Activated naive CD4-positive, alpha-beta T cell treated with anti-CD3 and anti-CD28 coated beads for 36 hours (primary cell): ENCODE measurements at regions of chr1 and their contacts with region 1.

Region 1: DNA sequence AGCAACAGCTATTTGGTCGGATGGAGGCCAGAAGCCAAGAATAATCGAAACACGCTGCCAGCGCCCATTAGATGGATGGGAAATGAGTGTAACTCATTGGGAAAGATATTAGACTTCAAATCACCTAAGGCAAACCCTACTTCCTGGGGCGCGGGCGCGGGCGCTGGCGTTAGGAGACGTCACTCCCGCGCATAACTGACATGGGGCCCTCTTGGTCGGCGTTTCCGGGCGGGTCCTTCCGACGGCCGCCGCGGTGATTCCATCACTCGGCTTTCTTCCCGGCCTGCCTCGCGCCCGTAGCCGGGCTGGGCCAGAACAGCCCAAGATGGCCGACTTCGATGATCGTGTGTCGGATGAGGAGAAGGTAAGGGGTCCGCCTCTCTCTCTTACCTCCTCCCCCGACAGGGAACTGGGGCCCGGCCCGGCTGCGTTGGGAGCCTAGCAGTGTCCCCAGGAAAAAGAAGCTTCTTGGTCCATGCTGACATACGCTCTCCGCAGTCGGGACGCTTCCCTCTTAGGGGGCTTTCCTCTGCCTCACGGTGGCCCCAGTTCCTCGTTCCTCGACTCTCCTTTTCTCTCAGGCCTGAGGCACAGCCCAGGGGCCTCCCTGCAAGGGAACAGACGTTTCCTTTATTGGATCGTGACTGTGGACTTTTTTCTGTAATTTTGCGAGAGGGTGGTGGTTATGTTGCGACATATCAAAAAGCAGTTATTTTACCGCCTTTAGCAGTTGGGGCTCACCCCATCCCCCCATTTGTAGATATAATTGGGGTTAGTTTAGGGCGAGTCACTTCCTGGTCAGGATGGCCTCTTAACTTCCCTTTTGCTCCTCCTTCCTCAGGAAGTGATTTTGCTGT is at the start of gene CAPZA1:
- DNase-seq: peak; percentile 95
- H3K4me3 Mint-ChIP-seq: peak within 1 kb of the TSS; percentile 99
- H3K27ac Mint-ChIP-seq: peak within 1 kb of the TSS; percentile 100
- H3K4me1 Mint-ChIP-seq: peaks cover 48% of the 10 kb centered on the region
- H3K27me3 Mint-ChIP-seq: no peaks in the 10 kb centered on the region
- total RNA-seq, gene CAPZA1: 231 to 242 TPM

Region 2: DNA sequence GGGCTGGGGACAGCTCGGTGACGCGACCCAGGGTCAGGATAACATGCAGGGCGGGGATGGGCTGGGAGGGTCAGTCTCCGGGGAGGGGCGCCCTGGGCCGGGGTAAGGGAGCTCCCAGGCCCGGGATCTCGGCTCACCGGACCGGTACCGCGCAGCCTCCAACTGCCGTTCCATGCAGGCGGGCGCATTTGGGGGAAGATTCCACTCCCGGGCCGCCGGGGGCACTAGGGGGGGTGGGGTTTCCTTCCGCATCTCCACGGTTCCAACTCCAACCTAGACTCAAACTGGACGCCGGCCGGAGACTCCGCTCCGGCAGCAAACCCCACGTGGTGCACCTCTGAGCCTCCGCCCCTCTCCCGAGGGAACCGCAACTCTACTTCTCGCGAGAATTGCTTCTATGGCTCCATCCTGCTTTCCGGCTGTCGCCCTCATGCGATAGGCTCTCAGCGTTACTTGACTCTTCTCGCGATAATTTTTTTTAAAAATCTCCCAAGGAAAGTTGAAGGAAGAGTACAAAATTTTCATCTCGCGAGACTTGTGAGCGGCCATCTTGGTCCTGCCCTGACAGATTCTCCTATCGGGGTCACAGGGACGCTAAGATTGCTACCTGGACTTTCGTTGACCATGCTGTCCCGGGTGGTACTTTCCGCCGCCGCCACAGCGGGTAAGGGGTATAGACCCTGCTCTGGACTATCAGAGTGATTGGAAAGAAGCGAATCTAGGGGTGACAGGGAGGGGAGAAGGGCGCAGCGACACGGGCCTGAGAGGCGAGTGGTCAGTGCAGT is 1170.6 kb before region 1 on chr1 and contains the starts of genes ATP5PB and WDR77:
- CTCF ChIA-PET with region 1: no interaction called
- intact Hi-C with region 1: loop called (anchors 2 kb)
- DNase-seq: peak; percentile 96
- H3K4me3 Mint-ChIP-seq: peak within 1 kb of the TSS; percentile 100
- H3K27ac Mint-ChIP-seq: peak within 1 kb of the TSS; percentile 96
- H3K4me1 Mint-ChIP-seq: peaks cover 71% of the 10 kb centered on the region
- H3K27me3 Mint-ChIP-seq: no peaks in the 10 kb centered on the region
- total RNA-seq, gene ATP5PB: 324 to 331 TPM
- total RNA-seq, gene WDR77: 43.1 to 48.8 TPM

Region 3: DNA sequence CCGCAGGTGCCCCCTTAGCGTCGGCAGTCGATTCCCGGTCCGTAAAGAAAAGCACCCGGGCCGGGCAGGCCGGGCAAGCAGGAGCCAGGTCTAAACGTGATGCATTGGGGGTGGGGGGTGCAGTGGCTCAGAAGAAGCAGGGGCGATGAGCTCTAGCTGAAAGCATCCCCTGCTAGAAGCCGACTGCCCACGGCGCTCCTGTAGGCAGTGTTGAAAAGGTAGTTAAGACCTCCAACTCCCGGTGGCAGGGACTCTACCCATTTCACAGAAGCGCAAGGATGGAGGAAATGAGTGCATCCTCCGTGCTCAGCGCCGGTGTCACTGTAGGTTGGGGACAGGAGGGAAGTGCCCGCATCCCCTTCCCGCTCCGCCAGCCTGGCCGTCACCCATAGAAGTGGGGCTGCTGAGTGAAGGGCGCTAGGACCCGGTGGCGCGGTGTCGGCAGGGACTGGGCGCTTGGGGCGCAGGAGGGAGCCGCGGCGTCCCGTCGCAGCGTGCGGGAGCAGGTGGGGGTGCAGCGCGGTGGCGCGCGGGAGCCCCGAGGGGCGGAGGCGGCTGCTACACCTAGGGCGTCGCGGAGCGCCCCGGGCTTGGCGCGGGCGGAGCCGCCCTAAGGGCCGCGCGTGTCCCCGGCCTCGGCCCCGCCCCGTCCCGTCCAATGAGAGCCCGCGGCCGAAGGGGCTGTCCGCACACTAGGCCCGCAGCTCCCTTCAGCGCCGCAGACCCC is 111.3 kb before region 1 on chr1 and contains the start of gene WNT2B:
- CTCF ChIA-PET with region 1: no interaction called
- intact Hi-C with region 1: loop called (anchors 2 kb)
- DNase-seq: peak; percentile 77
- H3K4me3 Mint-ChIP-seq: peak within 1 kb of the TSS; percentile 73
- H3K27ac Mint-ChIP-seq: no peak within 1 kb of the TSS
- H3K4me1 Mint-ChIP-seq: no peaks in the 10 kb centered on the region
- H3K27me3 Mint-ChIP-seq: peaks cover 25% of the 10 kb centered on the region
- total RNA-seq, gene WNT2B: 0.12 TPM in 1 of 2 experiments, not detected in the other

Region 4: GRCh38 chr1:112666946-112667345 is 47.2 kb after region 1 on chr1:
- CTCF ChIA-PET with region 1: no interaction called
- intact Hi-C with region 1: loop called (anchors 1 kb)
- DNase-seq: no peak
- H3K4me3 Mint-ChIP-seq: no peak overlapping the region
- H3K27ac Mint-ChIP-seq: peak overlapping the region; percentile 67
- H3K4me1 Mint-ChIP-seq: peaks cover 33% of the 10 kb centered on the region
- H3K27me3 Mint-ChIP-seq: no peaks in the 10 kb centered on the region

Region 5: DNA sequence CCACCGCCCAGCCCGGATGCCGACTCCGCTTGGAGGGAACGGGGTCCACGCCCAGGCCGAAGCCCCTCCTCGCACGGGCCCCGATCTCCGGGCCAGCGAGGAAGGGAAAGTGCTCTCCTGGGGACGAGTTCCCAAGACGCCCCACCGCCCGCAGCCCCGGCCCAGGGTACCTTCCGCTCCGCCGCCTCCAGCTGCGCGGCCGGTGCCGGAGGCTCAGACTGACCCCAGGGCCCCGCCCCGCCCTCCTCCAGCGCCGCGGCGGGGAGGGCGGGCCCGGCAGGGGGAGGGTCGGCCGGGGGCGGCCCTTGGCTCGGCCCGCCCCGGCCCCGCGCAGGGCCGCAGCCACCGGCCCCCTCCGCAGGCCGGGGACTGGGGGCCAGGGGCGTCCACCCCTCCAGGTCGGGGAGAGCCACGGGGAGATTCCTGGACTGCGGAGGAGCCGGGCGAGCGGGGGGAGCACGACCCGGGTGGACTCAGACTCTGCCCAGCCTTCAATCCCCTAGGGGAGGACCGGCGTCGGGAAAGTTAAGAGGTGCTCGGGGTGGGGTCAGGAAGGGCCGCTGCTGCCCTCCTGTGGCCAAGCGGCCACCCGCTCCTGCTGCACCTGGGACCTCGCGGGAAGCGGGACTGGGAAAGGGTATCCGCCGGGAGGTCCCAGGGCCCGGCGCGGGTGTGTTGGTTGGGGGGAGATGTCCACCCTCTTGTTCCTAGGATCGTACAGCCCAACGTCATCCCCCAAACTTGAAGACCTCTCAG is 87.3 kb after region 1 on chr1 and contains the start of gene RHOC:
- CTCF ChIA-PET with region 1: interaction called, 5 read pairs
- intact Hi-C with region 1: loop called (anchors 1 kb)
- DNase-seq: peak; percentile 80
- H3K4me3 Mint-ChIP-seq: peak within 1 kb of the TSS; percentile 69
- H3K27ac Mint-ChIP-seq: no peak within 1 kb of the TSS
- H3K4me1 Mint-ChIP-seq: peaks cover 36% of the 10 kb centered on the region
- H3K27me3 Mint-ChIP-seq: peaks cover 2% of the 10 kb centered on the region
- total RNA-seq, gene RHOC: 36.3 to 37.3 TPM